Caki2 (cell line): ENCODE measurements at regions of chr15 and their contacts with region 1.

Region 1: GRCh38 chr15:77543159-77543882 is 89.4 kb downstream of the LINGO1 start:
- DNase-seq: peak; percentile 73

Region 2: GRCh38 chr15:77070495-77071304 is 472.6 kb before region 1 on chr15 and contains the start of gene TSPAN3:
- in situ Hi-C with region 1: loop called (anchors 25 kb)
- DNase-seq: peak; percentile 84
- total RNA-seq, gene TSPAN3: 271 and 282 TPM in 2 replicates

Region 3: DNA sequence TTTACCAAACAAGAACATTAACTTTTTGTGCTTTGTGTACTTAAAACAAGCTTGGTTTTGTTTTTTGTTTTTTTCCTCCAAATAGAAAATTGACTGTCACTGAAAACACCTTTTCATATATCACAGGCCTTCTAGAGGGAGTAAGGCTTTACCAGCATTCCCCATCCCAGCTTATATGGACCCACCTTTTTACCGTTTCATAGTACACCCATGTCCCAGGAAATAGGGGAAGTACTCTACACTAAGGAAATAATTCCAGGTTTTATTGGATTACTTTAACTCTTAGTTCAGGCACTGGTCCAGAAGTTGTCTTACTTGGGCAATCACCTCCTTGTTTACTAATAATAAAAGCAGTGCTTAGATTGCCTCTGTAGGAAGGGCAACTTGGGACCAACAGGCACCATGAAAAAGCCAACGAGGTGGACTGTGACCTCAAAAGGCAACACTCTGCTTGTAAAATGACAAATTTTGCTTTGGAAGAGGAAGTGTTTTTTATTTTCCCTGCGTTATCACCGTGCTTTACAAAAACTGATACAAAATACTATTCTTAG is 96.4 kb before region 1 on chr15:
- in situ Hi-C with region 1: no loop called
- DNase-seq: no peak